Activated naive CD4-positive, alpha-beta T cell treated with anti-CD3 and anti-CD28 coated beads, Interleukin-2, amount 10 ng/mL, durations not matched to agents 7 days and 5 days (primary cell): ENCODE measurements at regions of chr3 and their contacts with region 1.

Region 1: GRCh38 chr3:129942296-129942695 is 32.2 kb upstream of the TRH start:
- DNase-seq: peak; percentile 56
- H3K4me3 Mint-ChIP-seq: no peak overlapping the region
- H3K27ac Mint-ChIP-seq: no peak overlapping the region
- H3K4me1 Mint-ChIP-seq: peaks cover 9% of the 10 kb centered on the region
- H3K27me3 Mint-ChIP-seq: peaks cover 23% of the 10 kb centered on the region

Region 2: DNA sequence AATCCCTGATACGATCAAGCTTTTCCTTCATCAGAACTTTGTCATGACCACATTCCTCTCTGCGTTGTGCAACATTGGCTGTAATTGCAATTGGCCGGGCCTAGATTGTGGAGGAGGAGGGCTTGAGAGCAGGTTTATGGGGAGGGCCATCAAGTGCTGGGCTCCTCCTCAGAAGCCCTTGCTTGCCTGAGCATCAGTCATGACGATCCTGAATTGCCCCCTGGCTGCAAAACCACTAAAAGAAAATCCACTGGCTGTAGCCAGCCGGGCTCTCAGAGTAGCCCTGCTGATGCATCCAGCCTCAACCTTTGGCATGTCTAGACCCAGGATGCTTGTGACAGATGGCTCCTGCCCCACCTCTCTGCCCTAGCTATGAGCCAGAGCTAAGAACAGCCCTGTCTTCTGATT is 18.8 kb after region 1 on chr3:
- CTCF ChIA-PET with region 1: interaction called, 12 read pairs
- DNase-seq: no peak
- H3K4me3 Mint-ChIP-seq: no peak overlapping the region
- H3K27ac Mint-ChIP-seq: no peak overlapping the region
- H3K4me1 Mint-ChIP-seq: no peaks in the 10 kb centered on the region
- H3K27me3 Mint-ChIP-seq: peaks cover 10% of the 10 kb centered on the region

Region 3: DNA sequence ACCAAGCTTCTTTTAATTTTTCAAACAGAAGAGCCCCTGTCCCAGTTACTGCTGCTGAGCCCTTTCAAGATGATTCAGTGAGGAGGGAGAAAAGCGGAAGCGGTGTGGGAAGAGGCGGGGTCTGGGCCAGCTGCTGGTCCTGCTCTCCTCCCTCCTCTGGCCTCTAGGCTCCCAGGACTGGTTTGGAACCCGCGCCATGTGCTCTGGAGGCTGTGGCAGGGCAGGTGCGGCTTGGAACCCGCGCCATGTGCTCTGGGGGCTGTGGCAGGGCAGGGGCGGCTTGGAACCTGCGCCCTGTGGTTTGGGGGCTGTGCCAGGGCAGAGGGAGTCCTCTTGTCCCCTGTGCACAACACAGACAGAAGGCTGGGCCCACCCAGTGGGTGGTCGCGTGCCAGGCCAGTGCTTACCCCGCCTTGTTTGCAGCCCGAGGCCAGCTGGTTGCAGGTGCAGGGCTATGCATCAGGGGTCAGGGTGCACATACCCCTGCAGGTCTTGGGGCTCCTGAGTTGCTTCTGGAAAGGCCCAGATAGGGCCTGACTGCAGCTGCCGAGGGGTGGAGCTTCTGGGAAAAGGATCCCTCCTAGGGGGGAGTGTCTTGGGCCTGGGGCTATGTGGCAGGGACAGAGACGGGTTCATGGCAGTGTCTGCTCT is 151.6 kb after region 1 on chr3:
- CTCF ChIA-PET with region 1: interaction called, 19 read pairs
- DNase-seq: peak; percentile 54
- H3K4me3 Mint-ChIP-seq: peak overlapping the region; percentile 10
- H3K27ac Mint-ChIP-seq: peak overlapping the region; percentile 64
- H3K4me1 Mint-ChIP-seq: peaks cover 35% of the 10 kb centered on the region
- H3K27me3 Mint-ChIP-seq: peaks cover 10% of the 10 kb centered on the region

Region 4: DNA sequence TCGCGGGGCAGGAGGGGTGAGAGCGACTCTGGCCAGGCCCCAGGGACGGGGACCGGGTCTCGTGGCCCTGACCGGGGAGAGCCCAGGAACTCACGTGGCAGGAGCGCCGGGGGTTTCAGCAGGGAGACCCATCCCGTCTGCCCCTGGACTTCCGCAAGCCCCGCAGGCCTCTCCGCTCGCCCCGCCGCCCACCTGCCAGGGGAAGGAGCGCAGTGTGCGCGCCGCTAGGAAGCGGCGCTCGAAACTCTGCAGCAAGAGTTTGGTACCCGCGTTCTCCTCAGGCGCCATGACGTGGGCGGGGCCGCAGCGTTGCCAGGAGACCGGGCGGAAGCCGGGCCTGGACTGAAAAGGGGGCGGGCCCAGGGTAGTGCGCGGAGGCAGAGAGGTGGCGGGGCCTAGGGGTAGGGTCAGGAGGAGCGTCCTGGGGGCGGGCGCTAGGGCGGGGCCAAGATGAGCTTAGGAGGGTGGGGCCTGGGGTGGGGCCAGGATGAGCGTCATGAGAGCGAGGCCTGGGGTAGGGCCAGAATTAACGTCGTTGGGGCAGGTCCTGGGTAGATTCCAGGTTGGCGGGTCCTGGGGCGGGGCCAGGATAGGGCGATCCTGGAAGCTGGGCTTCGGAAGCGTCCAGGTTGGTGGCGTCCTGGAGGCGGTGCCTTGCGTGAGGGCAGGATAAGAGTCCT is 169.0 kb after region 1 on chr3:
- CTCF ChIA-PET with region 1: interaction called, 29 read pairs
- DNase-seq: peak; percentile 99
- H3K4me3 Mint-ChIP-seq: peak overlapping the region; percentile 93
- H3K27ac Mint-ChIP-seq: peak overlapping the region; percentile 100
- H3K4me1 Mint-ChIP-seq: peaks cover 20% of the 10 kb centered on the region
- H3K27me3 Mint-ChIP-seq: peaks cover 24% of the 10 kb centered on the region